KBM-7 (cell line): ENCODE measurements at regions of chr10 and their contacts with region 1.

Region 1: GRCh38 chr10:23158370-23158769 is 33.7 kb upstream of the PTF1A start:
- DNase-seq: peak; percentile 77

Region 2: DNA sequence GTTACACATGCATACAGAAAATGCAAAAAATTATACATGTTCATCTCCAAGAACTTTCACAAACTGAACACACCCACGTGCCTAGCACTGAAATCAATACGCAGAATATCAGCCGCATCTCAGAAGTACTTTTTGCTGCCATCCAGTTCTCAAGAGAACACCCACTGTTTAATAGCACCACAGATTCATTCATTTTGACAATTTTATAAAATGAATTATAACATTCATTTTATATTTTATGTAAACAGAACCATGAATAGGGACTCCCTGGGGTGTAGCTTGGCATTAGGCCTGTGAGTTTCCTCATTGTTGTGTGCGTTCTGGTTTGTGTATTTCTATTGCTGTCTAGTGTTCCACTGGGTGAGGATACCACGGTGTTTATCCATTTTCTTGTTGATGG is 366.7 kb before region 1 on chr10:
- in situ Hi-C with region 1: no loop called
- DNase-seq: no peak

Region 3: GRCh38 chr10:23067939-23068775 is 90.2 kb before region 1 on chr10:
- in situ Hi-C with region 1: no loop called
- DNase-seq: peak; percentile 83

Region 4: DNA sequence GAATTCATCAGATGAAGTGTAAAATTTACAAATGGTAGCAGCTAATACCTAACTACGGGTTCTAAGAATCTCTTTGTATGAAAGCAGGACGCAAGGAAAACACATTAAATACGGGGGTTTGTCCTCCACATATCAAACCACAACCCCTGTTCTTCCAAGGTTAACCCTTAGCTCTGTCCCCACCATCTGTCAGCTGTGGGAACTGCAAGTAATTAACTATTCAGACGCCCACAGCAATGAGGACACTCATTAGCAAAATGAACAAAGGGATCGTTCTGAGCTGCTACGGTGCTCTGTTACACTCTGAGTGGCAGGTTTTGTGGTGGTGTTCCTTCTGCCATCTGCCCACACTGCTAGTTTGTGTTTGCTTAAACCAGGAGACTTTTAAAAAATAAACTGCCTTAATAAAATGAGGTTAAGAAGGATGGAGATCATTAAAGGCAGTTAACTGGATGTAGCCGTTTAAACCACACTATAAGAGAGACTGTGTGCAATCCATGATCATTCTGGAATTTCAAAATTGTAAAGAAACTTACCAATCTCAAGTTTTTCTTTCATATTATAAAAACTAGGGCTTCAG is 134.9 kb after region 1 on chr10:
- in situ Hi-C with region 1: loop called (anchors 25 kb)
- DNase-seq: peak; percentile 47